ENCODE measurements at regions of chr20 and their contacts with region 1.

Region 1: DNA sequence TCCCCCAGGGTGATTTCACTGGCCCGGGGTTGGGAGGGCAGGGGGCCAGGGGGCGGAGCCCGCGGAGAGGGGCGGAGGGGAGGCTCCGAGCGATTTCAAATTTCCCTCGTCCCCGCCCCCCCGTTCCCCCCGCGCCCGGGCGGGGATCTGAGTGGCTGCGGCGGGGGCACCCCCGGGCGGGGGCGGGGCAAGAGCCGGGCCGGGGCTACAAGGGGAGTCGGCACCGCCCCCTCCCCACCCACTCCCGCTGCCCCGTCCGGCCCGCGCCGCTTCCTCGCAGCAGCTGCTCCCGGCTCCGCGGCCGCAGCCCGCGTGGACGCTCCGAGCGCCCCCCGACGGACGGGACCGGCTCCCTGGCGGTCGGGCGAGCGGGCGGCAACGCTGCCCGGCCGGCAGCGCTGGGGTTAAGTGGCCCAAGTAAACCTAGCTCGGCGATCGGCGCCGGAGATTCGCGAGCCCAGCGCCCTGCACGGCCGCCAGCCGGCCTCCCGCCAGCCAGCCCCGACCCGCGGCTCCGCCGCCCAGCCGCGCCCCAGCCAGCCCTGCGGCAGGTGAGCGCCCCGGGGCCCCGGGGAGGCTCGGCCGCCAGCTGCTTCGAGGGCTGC is at the start of gene DNMT3B:
- DNase-seq: peak; percentile 65 to 82 (median 78)
- H3K4me3 ChIP-seq: peak within 1 kb of the TSS; percentile 69 to 99 (median 90)
- H3K27ac ChIP-seq: peak within 1 kb of the TSS in 1 of 2 experiments; percentile 76
- H3K4me1 ChIP-seq: peaks cover 12 to 38% (median 32%) of the 10 kb centered on the region in 4 experiments
- H3K27me3 ChIP-seq: no peaks in the 10 kb centered on the region

Region 2: GRCh38 chr20:32743237-32744112 is 18.8 kb before region 1 on chr20 and contains the start of gene COMMD7:
- CTCF ChIA-PET with region 1: interaction called, 14 read pairs
- POLR2A ChIA-PET with region 1: interaction called, 11 read pairs
- DNase-seq: peak; percentile 74 to 85 (median 75)
- H3K4me3 ChIP-seq: peak within 1 kb of the TSS; percentile 45 to 96 (median 88)
- H3K27ac ChIP-seq: peak within 1 kb of the TSS; percentile 80 to 93
- H3K4me1 ChIP-seq: peaks cover 10 to 47% (median 32%) of the 10 kb centered on the region in 4 experiments
- H3K27me3 ChIP-seq: no peaks in the 10 kb centered on the region